IMR-90 (cell line): ENCODE measurements at regions of chr17 and their contacts with region 1.

Region 1: DNA sequence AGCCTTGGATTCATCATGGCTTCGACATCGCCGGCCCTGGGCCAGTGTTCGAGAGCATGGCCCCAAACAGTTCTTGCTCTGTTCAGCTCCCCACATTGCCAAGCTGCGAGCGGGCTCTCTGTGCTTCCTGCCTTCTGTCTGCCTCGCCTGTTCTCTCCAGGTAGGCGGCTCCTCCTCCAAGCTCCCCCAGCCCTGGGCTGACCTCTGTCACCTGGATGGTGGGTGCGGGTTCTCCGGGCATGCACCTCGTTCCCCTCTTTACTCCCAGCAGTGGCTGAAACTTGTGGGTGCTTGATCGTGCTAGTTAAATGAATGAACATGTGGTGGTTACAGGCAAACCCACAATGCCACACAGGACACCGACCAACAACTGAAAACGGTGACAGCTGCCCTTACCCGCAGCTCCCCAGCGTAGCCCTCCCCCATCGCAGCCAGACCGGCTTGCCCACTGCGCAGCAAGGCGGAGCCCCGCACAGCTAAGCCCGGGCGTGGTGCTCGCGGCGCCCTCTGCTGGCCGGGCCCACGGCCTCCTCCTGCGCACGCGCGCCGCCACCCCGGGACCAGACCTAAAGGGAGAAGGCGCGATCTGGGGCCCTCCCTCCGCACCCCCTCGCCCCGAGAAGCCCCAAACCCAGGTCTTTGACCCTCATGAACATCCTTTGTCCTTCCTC is 23.0 kb upstream of the EIF1 start:
- DNase-seq: peak; percentile 74
- ATAC-seq: peak; percentile 90
- H3K4me3 ChIP-seq: peak overlapping the region; percentile 40
- H3K27ac ChIP-seq: peak overlapping the region; percentile 55
- H3K4me1 ChIP-seq: peaks cover 11% of the 10 kb centered on the region
- H3K27me3 ChIP-seq: no peaks in the 10 kb centered on the region
- CTCF ChIP-seq: peak; percentile 94
- POLR2A ChIP-seq: no peak
- RAD21 ChIP-seq: peak; percentile 29; the same call in 1 of the 2 replicates

Region 2: GRCh38 chr17:40622509-40622928 is 1043.2 kb before region 1 on chr17:
- CTCF ChIA-PET with region 1: interaction called, 4 read pairs
- POLR2A ChIA-PET with region 1: no interaction called
- dilution Hi-C with region 1: no loop called
- in situ Hi-C with region 1: loop called (anchors 10 kb)
- intact Hi-C with region 1: loop called (anchors 1 kb)
- DNase-seq: no peak
- ATAC-seq: no peak
- H3K4me3 ChIP-seq: no peak overlapping the region
- H3K27ac ChIP-seq: no peak overlapping the region
- H3K4me1 ChIP-seq: peaks cover 2% of the 10 kb centered on the region; the same call in 1 of the 2 replicates
- H3K27me3 ChIP-seq: peaks cover 9% of the 10 kb centered on the region
- CTCF ChIP-seq: no peak
- POLR2A ChIP-seq: no peak
- RAD21 ChIP-seq: no peak

Region 3: GRCh38 chr17:40803617-40804082 is 862.1 kb before region 1 on chr17:
- CTCF ChIA-PET with region 1: interaction called, 15 read pairs
- POLR2A ChIA-PET with region 1: no interaction called
- dilution Hi-C with region 1: no loop called
- in situ Hi-C with region 1: loop called (anchors 5 kb)
- intact Hi-C with region 1: loop called (anchors 1 kb)
- DNase-seq: peak; percentile 66
- ATAC-seq: peak; percentile 100
- H3K4me3 ChIP-seq: no peak overlapping the region
- H3K27ac ChIP-seq: no peak overlapping the region
- H3K4me1 ChIP-seq: no peaks in the 10 kb centered on the region
- H3K27me3 ChIP-seq: peaks cover 25% of the 10 kb centered on the region
- CTCF ChIP-seq: peak; percentile 92
- POLR2A ChIP-seq: peak; percentile 42; the same call in 1 of the 2 replicates
- RAD21 ChIP-seq: peak; percentile 95

Region 4: DNA sequence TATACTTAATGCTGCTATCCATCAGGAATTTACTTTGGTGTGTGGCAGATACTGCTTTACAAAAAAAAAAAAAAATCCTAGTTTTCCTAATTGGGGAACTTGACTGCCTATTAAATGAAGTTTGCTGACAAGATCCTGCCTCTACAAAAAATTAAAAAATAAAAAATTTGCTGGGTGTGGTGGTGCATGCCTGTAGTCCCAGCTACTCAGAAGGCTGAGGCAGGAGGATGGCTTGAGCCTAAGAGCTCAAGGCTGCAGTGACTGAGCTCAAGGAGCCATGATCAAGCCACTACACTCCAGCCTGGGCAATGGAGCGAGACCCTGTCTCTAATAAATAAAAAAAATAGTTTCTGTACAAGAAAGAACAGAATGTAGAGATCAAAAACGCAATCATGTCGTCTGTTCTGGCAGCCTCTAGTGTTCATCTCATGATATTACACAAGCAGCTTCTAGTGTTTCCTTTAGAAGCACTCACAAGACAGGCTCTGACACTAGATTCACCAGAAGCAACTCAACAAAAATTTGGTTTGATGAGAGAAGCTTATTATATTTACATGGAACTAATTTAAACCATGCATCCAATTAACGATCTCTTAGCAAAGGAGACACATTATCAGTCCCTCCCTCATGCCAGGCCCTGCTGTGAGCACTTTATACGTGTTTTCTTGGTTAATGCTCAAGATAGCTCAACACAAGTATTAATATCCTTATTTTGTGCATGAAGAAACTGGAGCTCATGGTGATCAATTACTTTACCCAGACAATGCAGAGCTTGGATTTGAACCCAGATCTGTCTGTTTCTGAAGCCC is 343.4 kb before region 1 on chr17:
- CTCF ChIA-PET with region 1: interaction called, 7 read pairs
- POLR2A ChIA-PET with region 1: no interaction called
- dilution Hi-C with region 1: no loop called
- in situ Hi-C with region 1: no loop called
- intact Hi-C with region 1: loop called (anchors 1 kb)
- DNase-seq: peak; percentile 79
- ATAC-seq: peak; percentile 97
- H3K4me3 ChIP-seq: no peak overlapping the region
- H3K27ac ChIP-seq: peak overlapping the region; percentile 51; the same call in 1 of the 2 replicates
- H3K4me1 ChIP-seq: peaks cover 2% of the 10 kb centered on the region
- H3K27me3 ChIP-seq: no peaks in the 10 kb centered on the region
- CTCF ChIP-seq: peak; percentile 80
- POLR2A ChIP-seq: no peak
- RAD21 ChIP-seq: peak; percentile 81

Region 5: DNA sequence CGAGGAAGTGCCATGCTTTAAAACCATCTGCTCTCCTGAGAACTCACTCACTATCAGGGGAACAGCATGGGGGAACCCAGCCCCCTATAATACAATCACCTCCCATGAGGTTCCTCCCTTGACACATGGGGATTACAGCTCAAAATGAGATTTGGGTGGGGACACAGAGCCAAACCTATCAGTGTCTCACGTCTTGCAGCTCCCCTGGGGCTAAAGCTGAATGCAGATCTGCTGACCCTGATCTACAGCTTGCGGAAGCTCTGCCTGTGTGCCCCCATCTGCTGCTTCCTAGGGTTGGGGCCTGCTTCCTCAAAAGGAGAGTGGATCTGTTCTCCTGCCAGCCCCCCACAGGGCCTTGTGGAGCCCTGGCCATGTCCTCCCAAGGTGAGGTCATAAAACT is 331.3 kb before region 1 on chr17:
- CTCF ChIA-PET with region 1: no interaction called
- POLR2A ChIA-PET with region 1: no interaction called
- dilution Hi-C with region 1: no loop called
- in situ Hi-C with region 1: loop called (anchors 5 kb)
- intact Hi-C with region 1: no loop called
- DNase-seq: no peak
- ATAC-seq: no peak
- H3K4me3 ChIP-seq: no peak overlapping the region
- H3K27ac ChIP-seq: no peak overlapping the region
- H3K4me1 ChIP-seq: peaks cover 4% of the 10 kb centered on the region
- H3K27me3 ChIP-seq: peaks cover 3% of the 10 kb centered on the region
- CTCF ChIP-seq: no peak
- POLR2A ChIP-seq: no peak
- RAD21 ChIP-seq: no peak

Region 6: GRCh38 chr17:41440531-41441033 is 225.1 kb before region 1 on chr17 and contains the start of gene KRT38:
- CTCF ChIA-PET with region 1: no interaction called
- POLR2A ChIA-PET with region 1: no interaction called
- dilution Hi-C with region 1: no loop called
- in situ Hi-C with region 1: no loop called
- intact Hi-C with region 1: no loop called
- DNase-seq: no peak
- ATAC-seq: no peak
- H3K4me3 ChIP-seq: no peak within 1 kb of the TSS
- H3K27ac ChIP-seq: no peak within 1 kb of the TSS
- H3K4me1 ChIP-seq: peaks cover 7% of the 10 kb centered on the region; the same call in 1 of the 2 replicates
- H3K27me3 ChIP-seq: no peaks in the 10 kb centered on the region
- CTCF ChIP-seq: no peak
- POLR2A ChIP-seq: no peak
- RAD21 ChIP-seq: no peak
- total RNA-seq, gene KRT38: not detected in 2 replicates

Region 7: DNA sequence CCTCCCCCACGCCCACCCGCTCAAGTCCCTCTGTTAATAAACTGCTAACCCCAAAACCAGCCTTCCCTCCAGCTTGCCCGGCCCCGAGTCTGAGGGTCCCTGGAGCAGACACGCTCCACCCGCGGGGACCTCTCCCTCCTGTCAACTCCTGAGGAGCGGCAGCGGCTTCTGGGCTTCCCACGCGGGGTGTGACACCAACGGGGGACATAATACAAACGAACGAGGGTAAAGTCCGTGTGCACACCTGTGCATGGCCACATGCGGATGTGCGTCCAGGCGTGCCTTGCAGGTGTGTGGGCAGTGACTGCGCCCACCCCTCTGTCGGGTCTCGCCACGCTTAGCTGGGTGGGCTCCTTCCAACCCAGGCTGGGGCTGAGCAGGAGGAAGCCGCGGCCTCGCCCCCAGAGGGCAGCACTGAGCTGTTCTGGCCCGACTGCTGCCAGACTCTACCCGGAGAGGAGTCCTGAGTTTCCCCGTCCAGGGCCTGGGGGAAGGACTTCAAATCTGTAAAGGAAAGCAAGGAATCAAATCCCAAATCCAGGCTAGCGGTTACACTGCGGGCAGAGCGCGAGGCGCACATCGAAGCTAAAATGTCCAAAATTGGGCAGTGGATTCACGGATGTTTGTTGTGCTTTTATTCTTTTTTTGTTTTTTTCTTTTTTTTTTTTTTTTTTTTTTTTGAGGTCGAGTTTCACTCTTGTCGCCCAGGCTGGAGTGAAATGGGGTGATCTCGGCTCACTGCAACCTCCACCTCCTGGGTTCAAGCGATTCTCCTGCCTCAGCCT is 17.1 kb before region 1 on chr17:
- CTCF ChIA-PET with region 1: interaction called, 36 read pairs
- POLR2A ChIA-PET with region 1: no interaction called
- dilution Hi-C with region 1: no loop called
- in situ Hi-C with region 1: no loop called
- intact Hi-C with region 1: no loop called
- DNase-seq: peak; percentile 77
- ATAC-seq: peak; percentile 92
- H3K4me3 ChIP-seq: 0 out of 2 replicates have a peak overlapping the region, but pooled peaks have one; percentile 9
- H3K27ac ChIP-seq: peak overlapping the region; percentile 79
- H3K4me1 ChIP-seq: peaks cover 14% of the 10 kb centered on the region
- H3K27me3 ChIP-seq: no peaks in the 10 kb centered on the region; the same call in 1 of the 2 replicates
- CTCF ChIP-seq: peak; percentile 84
- POLR2A ChIP-seq: no peak
- RAD21 ChIP-seq: peak; percentile 57

Region 8: DNA sequence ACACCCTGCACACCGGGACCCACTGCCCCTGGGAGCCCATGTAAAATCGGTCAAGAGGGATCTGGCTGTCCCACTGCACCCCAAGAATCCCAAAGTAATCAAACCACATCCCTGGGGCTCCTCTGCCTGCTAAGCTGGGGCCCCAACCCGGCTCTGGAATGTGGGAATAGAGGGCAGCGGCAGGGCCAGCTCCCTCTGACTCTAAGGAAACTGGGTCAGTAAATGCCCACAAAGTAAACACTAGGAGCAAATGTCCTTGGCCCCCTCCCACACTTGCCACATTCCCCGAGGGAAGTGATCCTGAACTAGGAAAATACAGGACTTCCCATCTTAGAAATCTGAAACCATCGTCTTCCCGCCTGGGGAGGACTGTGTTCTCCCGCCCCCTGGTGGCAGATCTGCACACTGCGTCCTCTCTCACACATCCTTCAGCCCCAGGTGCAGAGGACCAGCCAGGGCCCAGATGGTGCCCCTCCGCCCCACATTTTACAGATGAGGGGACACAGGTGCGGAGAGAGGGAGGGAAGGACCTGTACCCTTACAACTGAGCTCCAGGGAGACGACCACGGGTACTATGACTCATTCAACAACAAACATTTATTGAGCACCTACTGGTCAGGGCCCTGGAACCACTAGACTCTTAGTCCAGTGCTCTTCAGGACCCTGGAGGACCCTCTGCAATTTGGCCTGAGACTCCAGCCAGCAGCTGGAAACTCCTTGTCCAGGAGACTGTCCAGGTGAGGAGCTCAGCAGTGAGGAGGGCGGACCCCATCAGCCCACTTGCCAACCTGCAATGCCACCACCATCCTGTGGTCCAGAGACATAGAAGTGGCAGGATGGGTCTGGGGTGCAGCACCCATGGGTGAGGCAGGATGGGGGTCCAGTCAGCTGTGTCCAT is 135.9 kb after region 1 on chr17:
- CTCF ChIA-PET with region 1: no interaction called
- POLR2A ChIA-PET with region 1: no interaction called
- dilution Hi-C with region 1: no loop called
- in situ Hi-C with region 1: no loop called
- intact Hi-C with region 1: no loop called
- DNase-seq: peak; percentile 72
- ATAC-seq: peak; percentile 93
- H3K4me3 ChIP-seq: no peak overlapping the region
- H3K27ac ChIP-seq: no peak overlapping the region
- H3K4me1 ChIP-seq: peaks cover 11% of the 10 kb centered on the region
- H3K27me3 ChIP-seq: no peaks in the 10 kb centered on the region
- CTCF ChIP-seq: peak; percentile 96
- POLR2A ChIP-seq: peak; percentile 41; the same call in 1 of the 2 replicates
- RAD21 ChIP-seq: peak; percentile 97